Ovary (tissue), 10 donors: ENCODE measurements at regions of chr6 and their contacts with region 1.

Region 1: GRCh38 chr6:34154668-34155447 is 9.0 kb upstream of the GRM4 start:
- DNase-seq: peak; percentile 42 to 78 (median 61)
- H3K4me3 ChIP-seq: no peak overlapping the region
- H3K27ac ChIP-seq: no peak overlapping the region
- H3K4me1 ChIP-seq: peaks cover 3% of the 10 kb centered on the region
- H3K27me3 ChIP-seq: no peaks in the 10 kb centered on the region
- CTCF ChIP-seq: peak; percentile 83 to 95 (median 91)
- EP300 ChIP-seq: no peak
- POLR2A ChIP-seq: no peak

Region 2: DNA sequence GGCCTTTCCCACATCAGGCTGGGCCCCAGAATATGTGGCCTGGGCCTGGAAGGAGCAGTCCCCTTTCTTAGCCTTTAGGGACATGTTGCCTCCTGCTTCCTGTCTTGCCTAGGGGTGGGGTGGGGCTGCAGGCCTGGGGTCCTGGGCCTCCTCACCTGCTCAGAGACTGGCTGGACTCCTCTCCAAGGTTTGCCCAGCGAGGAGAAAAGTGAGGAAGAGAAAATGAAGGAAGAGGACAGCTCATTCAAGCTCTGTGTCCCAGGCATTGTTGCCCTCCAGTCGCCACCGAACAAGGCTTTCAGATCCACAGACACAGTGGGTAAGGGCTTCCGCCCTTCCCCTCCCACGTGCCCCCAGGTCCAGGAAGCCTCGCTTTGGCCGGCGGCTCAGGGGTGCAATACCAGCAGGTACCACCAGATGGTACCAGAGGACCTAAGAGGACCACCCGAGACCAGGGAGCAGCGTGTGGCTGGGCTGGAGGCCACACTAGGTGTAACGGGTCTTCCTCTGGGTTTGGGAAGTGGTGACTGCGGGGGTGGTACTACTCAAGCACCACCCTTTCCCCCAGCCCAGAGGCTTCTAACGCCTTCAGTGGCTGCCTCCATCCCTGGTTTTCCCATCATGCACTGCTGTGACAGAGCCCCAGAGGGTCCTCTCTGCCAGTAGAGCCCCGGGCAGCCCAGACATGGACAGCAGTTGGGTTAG is 569.3 kb before region 1 on chr6:
- intact Hi-C with region 1: loop called (anchors 5 kb)
- DNase-seq: peak; percentile 82 to 90 (median 87)
- H3K4me3 ChIP-seq: no peak overlapping the region
- H3K27ac ChIP-seq: no peak overlapping the region
- H3K4me1 ChIP-seq: peaks cover 13% of the 10 kb centered on the region
- H3K27me3 ChIP-seq: no peaks in the 10 kb centered on the region
- CTCF ChIP-seq: peak; percentile 95 to 99 (median 96)
- EP300 ChIP-seq: no peak
- POLR2A ChIP-seq: no peak

Region 3: DNA sequence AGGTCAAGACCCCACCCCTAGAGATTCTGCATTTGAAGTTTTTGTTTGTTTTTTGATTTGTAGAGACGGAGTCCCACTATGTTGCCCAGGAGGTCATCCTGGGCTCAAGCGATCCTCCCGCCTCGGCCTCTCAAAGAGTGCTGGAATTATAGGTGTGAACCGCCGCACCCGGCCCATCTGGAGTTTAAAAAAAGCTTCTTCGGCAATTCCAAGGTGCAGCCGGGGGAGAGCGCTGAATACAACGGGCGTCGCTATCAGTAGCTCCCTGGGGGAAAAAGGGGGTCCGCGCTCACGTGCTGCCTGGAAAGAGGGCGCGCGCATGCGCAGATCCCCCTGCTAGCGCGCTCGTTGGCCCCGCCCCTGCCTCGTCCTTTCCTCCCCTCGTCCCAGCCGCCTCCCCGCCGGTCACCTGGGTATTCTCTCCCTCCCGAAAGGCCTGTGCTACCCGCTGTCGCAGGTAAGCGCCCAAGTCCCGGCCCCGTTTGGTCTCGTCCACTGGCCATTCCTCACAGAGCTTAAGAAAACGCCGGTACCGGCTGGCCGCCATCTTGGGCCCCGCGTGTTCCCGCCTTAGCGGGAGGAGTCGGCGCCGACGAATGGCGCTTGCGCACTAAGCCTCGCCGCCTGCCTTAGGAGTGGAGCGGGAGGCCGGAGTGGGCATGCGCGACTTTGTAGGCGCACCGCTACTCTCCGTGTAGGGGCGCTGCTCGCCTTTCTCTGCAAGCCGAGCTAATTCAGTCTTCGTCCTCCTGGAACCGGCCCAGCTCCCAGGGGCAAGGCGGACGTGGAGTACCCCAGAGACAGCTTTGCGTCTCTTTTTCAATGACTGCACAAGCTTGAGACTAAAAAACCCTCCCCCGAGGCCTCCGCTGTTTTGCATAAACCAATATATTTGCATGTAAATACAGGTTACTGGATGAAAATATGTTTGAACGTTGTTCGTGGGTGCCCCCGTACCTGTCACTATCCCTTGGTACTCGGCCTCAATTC is 443.4 kb before region 1 on chr6 and contains the start of gene UQCC2:
- intact Hi-C with region 1: loop called in 2 of 4 experiments (anchors 10 kb)
- DNase-seq: peak; percentile 97 to 99 (median 98)
- H3K4me3 ChIP-seq: peak within 1 kb of the TSS; percentile 76
- H3K27ac ChIP-seq: peak within 1 kb of the TSS; percentile 77 to 88
- H3K4me1 ChIP-seq: peaks cover 4% of the 10 kb centered on the region
- H3K27me3 ChIP-seq: no peaks in the 10 kb centered on the region
- CTCF ChIP-seq: peak; percentile 35 to 82 (median 48)
- EP300 ChIP-seq: no peak
- POLR2A ChIP-seq: peak; percentile 83
- total RNA-seq, gene UQCC2: 9.1 to 65.2 (median 38.0) TPM

Region 4: GRCh38 chr6:33744001-33744848 is 410.6 kb before region 1 on chr6:
- intact Hi-C with region 1: loop called in 2 of 4 experiments (anchors 10 kb)
- DNase-seq: peak; percentile 68 to 84 (median 80)
- H3K4me3 ChIP-seq: no peak overlapping the region
- H3K27ac ChIP-seq: no peak overlapping the region
- H3K4me1 ChIP-seq: peaks cover 2% of the 10 kb centered on the region
- H3K27me3 ChIP-seq: no peaks in the 10 kb centered on the region
- CTCF ChIP-seq: peak; percentile 53 to 85 (median 79)
- EP300 ChIP-seq: no peak
- POLR2A ChIP-seq: no peak

Region 5: GRCh38 chr6:33758815-33759236 is 396.0 kb before region 1 on chr6:
- intact Hi-C with region 1: no loop called
- DNase-seq: no peak
- H3K4me3 ChIP-seq: no peak overlapping the region
- H3K27ac ChIP-seq: no peak overlapping the region
- H3K4me1 ChIP-seq: no peaks in the 10 kb centered on the region
- H3K27me3 ChIP-seq: no peaks in the 10 kb centered on the region
- CTCF ChIP-seq: no peak
- EP300 ChIP-seq: no peak
- POLR2A ChIP-seq: no peak

Region 6: DNA sequence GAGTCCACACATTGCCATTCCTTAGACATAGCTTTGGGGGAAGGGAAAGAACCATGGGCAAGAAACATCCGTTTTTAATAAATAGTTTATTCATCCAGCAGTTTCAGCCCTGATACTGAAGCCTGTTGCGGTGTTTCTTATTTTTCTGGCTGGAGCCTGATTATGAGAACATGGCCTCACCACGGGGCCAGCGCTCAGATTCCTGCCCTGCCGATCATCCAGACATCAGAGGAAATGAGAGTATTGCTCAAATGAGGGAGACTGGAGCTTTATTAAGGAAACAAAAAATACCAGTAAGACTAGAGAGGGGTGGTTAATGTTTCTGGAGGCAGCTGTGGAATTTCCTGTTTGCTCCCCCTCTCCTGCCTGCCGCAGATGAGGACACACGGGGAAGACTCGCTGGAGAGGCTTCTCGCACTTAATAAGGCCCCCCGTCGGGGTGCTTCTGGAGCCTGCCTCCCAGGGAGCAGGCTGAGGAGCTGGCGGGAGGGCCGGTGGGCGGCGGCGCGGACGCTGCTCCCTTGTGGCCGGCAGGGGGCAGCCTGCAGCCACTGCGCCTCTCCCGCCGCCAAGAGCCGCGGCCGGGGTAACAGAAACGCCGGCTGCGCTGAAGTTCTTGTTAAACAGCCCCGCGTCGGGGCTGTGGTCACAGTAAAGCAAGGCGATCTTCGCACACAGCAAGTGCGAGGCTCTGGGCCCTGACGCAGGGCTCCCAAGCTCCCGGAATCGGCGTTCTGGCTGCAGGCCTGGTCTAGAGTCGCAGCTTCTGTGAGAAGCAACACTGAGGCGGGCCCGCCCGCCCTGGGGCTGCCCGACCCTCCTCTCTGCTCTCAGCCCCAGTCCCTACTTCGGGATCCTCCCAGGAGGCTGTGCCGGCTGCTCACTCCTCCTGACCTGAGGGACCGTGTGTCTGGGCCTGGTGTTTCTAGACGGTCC is 383.4 kb before region 1 on chr6:
- intact Hi-C with region 1: loop called in 1 of 4 experiments (anchors 10 kb)
- DNase-seq: peak; percentile 78 to 88 (median 80)
- H3K4me3 ChIP-seq: no peak overlapping the region
- H3K27ac ChIP-seq: peak overlapping the region; percentile 52 to 76
- H3K4me1 ChIP-seq: peaks cover 16% of the 10 kb centered on the region
- H3K27me3 ChIP-seq: no peaks in the 10 kb centered on the region
- CTCF ChIP-seq: peak; percentile 88 to 98 (median 91)
- EP300 ChIP-seq: no peak
- POLR2A ChIP-seq: no peak

Region 7: DNA sequence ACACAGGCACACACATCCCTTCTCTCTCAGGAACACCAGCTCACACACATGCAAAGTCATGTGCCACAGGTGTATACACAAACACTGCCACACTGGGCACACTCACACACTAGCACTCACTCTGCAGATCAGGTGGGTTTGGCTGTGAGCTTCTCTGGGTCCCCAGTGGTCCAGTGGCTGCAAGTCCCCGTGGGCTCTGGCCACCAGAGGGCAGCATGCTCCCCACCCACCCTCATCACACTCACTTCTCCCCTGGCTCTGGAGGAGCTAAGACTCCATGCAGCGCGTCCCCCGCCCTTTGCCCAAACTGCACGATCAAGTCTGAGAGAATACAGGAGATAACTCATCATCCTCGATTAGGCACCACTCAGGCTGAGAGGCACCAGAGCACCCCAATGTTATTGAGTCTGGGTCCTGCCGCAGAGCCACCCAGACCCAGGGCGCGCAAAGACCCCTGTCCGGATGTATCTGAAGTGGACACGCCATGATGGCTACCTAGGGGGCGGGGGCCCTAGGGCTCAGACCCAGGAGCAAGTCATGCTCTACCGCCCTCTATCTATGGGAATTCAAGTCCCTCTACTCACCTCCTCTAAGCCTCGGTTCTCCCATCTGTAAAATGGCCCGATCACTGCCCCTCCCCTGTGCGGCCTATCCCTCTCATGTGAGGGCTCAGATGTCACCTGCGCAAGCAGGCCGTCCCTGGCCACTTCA is 99.5 kb before region 1 on chr6:
- intact Hi-C with region 1: loop called in 1 of 4 experiments (anchors 10 kb)
- DNase-seq: peak; percentile 34 to 73 (median 57)
- H3K4me3 ChIP-seq: no peak overlapping the region
- H3K27ac ChIP-seq: no peak overlapping the region
- H3K4me1 ChIP-seq: peaks cover 3% of the 10 kb centered on the region
- H3K27me3 ChIP-seq: no peaks in the 10 kb centered on the region
- CTCF ChIP-seq: peak; percentile 16 to 28 (median 16)
- EP300 ChIP-seq: no peak
- POLR2A ChIP-seq: no peak

Region 8: GRCh38 chr6:34392497-34393190 is 237.8 kb after region 1 on chr6 and contains the start of gene NUDT3:
- intact Hi-C with region 1: no loop called
- DNase-seq: peak; percentile 93 to 97 (median 94)
- H3K4me3 ChIP-seq: peak within 1 kb of the TSS; percentile 50
- H3K27ac ChIP-seq: peak within 1 kb of the TSS; percentile 82 to 91
- H3K4me1 ChIP-seq: peaks cover 3% of the 10 kb centered on the region
- H3K27me3 ChIP-seq: no peaks in the 10 kb centered on the region
- CTCF ChIP-seq: peak; percentile 91 to 95 (median 93)
- EP300 ChIP-seq: no peak
- POLR2A ChIP-seq: peak; percentile 87
- total RNA-seq, gene NUDT3: 23.2 to 60.7 (median 50.9) TPM